OCI-LY7 (cell line): ENCODE measurements at regions of chr11 and their contacts with region 1.

Region 1: DNA sequence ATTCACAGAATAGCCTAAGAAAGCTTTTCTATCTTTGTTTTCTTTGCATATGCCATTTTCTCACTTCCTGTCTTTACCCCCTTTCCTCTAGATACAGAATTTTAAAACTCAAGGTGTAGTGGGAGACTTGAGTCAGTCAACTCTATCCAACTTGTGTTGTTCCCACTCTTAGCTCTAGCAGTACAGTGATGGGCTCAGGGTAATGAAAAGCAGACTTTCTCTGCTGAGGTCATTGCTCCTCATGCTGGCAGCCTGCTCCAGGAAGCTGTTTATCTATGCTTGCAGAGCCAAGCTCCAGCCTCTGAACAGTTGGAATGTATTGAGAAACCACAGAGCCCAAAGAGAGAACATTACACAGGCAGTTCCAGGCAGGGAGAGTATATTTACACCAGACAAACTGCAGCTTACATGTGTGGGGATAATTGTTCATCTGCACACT is 68.1 kb downstream of the CSTPP1 start:
- DNase-seq: peak; percentile 67
- H3K4me3 ChIP-seq: peak overlapping the region; percentile 35
- H3K27ac ChIP-seq: peak overlapping the region; percentile 89
- H3K4me1 ChIP-seq: peaks cover 84% of the 10 kb centered on the region
- CTCF ChIP-seq: no peak

Region 2: DNA sequence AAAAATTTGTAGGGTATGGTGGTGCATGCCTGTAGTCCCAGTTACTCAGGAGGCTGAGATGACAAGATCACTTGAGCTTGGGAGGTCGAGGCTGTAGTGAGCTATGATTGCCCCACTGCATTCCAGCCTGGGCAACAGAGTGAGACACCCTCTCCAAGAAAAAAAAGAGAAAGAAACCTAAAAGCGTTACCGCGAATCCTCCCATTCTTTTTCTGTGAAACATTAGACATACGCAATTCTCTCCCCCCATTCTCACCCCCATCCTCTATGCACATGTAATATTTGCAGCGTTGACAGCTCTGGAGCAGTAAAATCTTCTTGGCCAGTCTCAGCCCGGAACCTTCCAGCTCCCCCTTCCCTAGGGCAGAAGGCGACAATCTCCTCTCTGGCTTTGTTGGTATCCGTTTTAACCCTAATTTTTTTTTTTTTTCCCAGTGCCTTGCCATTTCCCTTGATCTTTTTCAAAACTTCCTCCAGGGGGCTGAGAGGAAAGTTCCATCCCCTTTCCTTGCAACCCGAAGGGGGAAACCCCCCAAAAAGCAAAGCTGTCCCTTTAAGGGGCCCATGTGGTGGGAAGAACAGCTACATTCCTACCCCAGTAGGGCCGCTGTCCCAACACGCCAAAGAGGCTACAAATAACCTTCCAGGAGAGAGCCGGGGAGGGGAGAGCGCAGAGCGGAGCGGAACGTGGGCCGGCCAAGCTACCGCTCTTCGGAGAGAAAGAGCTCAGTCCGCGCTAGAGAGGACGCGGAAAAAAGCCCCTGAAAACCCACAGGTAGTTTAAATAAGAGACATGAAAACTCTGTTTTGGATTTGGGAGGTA is 88.1 kb before region 1 on chr11:
- CTCF ChIA-PET with region 1: no interaction called
- POLR2A ChIA-PET with region 1: no interaction called
- intact Hi-C with region 1: loop called (anchors 5 kb)
- DNase-seq: no peak
- H3K4me3 ChIP-seq: peak overlapping the region; percentile 74
- H3K27ac ChIP-seq: no peak overlapping the region
- H3K4me1 ChIP-seq: peaks cover 66% of the 10 kb centered on the region
- CTCF ChIP-seq: peak; percentile 25; the same call in 1 of the 2 replicates

Region 3: DNA sequence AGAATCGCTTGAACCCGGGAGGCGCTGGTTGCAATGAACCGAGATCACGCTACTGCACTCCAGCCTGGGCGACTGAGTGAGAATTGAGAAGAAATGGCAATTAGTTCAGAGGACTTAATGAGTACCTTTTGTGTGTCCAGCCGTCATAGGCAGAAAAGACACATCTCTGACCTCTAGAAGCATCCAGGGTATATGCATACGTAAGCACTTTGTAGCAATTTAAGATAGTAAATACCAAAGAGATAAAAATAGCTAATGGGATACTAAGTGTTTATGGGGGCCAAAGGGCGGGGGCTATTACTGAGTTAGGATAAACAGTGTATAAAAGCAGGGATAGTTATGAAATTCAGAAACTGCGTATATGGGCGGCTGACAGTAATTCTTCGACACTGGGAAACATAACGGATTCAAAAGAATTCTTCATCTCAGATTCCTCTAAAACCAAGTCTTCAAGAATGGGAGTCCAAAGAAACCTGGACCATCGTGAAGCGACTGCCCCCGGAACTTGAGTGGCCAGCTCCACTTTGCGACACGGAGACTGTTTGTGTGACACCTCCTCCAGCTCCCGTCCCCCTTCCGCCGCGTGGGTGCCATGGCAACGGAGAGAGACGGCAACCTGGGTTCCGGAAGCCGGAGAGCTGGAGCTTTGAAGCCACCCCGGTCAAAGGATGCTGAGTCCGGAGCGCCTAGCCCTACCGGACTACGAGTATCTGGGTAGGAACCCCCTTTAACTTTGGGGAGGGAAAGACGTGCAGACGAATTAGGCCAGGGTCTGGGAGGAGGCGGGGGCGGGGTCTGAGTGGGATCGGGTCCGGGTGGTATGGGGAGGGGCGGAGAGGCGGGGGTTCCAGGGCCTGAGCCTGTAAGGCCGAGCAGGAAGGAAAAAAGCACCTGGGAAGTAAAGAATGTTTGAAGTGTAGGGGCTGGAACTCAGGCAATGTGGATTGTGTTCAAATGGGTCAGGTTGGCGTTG is 68.2 kb before region 1 on chr11 and contains the start of gene CSTPP1:
- CTCF ChIA-PET with region 1: no interaction called
- POLR2A ChIA-PET with region 1: interaction called, 6 read pairs
- intact Hi-C with region 1: loop called (anchors 5 kb)
- DNase-seq: peak; percentile 96
- H3K4me3 ChIP-seq: peak within 1 kb of the TSS; percentile 82
- H3K27ac ChIP-seq: peak within 1 kb of the TSS; percentile 36
- H3K4me1 ChIP-seq: peaks cover 16% of the 10 kb centered on the region
- CTCF ChIP-seq: no peak
- total RNA-seq, gene CSTPP1: 35.2 and 39.6 TPM in 2 replicates

Region 4: DNA sequence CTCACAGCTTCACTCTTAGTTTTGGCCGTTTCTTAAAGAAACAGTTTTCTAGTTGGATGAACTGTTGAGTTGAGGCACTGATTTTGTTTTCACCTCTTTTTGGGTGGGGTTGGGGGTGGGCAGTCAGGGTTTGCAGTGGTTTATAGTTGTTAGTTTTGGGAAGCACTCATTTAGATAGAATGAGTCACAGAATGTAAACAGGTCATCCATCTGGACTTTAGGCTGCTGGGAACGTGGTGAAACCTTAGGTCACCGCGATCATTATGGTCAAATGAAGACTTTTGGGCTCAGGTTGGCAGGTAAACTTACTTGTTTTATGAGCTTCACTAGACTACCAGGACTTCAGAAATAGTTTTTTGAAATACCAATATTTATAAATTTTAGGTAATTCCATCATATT is 19.6 kb before region 1 on chr11:
- CTCF ChIA-PET with region 1: interaction called, 3 read pairs
- POLR2A ChIA-PET with region 1: interaction called, 27 read pairs
- intact Hi-C with region 1: no loop called
- DNase-seq: no peak
- H3K4me3 ChIP-seq: no peak overlapping the region
- H3K27ac ChIP-seq: no peak overlapping the region
- H3K4me1 ChIP-seq: no peaks in the 10 kb centered on the region
- CTCF ChIP-seq: no peak

Region 5: GRCh38 chr11:47083913-47084312 is 79.3 kb after region 1 on chr11:
- CTCF ChIA-PET with region 1: no interaction called
- POLR2A ChIA-PET with region 1: interaction called, 11 read pairs
- intact Hi-C with region 1: no loop called
- DNase-seq: no peak
- H3K4me3 ChIP-seq: no peak overlapping the region
- H3K27ac ChIP-seq: no peak overlapping the region
- H3K4me1 ChIP-seq: peaks cover 8% of the 10 kb centered on the region
- CTCF ChIP-seq: no peak

Region 6: DNA sequence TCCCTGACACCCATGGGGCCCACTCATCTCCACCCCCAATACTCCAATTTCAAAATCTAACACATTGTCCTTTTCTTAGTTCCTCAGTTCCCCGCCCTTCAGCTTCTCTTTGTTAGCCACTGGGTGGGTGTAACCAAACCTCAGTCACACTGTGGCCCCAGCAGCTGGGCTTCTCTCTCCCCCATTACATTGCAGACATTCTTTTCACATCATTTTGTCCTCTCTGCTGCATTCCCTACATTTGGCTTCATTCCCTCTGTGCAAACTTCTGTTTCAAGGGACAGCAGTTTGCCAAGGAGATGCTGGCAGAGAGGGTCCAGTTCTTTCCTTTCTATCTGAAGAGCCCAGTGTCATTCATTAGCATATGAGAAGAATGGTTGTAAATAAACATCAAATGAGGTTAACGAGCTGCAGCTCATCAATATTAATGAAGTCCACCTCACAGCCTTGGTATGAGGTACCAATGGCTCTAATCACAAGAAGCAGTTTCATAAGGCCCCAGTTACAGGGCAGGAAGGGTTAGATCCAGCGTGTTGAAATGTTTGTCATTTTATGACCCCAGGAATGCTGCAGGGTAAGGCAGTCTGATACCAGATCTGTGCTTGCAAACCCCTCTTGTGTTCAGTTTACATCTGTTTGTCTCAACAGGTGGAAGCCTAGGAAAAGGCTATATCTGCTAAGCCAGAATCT is 99.8 kb after region 1 on chr11:
- CTCF ChIA-PET with region 1: interaction called, 3 read pairs
- POLR2A ChIA-PET with region 1: interaction called, 22 read pairs
- intact Hi-C with region 1: no loop called
- DNase-seq: peak; percentile 51
- H3K4me3 ChIP-seq: peak overlapping the region; percentile 20
- H3K27ac ChIP-seq: peak overlapping the region; percentile 99
- H3K4me1 ChIP-seq: peaks cover 83% of the 10 kb centered on the region
- CTCF ChIP-seq: no peak

Region 7: GRCh38 chr11:47152953-47153950 is 148.6 kb after region 1 on chr11:
- CTCF ChIA-PET with region 1: interaction called, 3 read pairs
- POLR2A ChIA-PET with region 1: interaction called, 16 read pairs
- intact Hi-C with region 1: loop called (anchors 2 kb)
- DNase-seq: peak; percentile 94
- H3K4me3 ChIP-seq: peak overlapping the region; percentile 53
- H3K27ac ChIP-seq: peak overlapping the region; percentile 95
- H3K4me1 ChIP-seq: peaks cover 93% of the 10 kb centered on the region
- CTCF ChIP-seq: peak; percentile 100

Region 8: GRCh38 chr11:47213985-47214564 is 209.5 kb after region 1 on chr11:
- CTCF ChIA-PET with region 1: no interaction called
- POLR2A ChIA-PET with region 1: no interaction called
- intact Hi-C with region 1: no loop called
- DNase-seq: peak; percentile 37
- H3K4me3 ChIP-seq: peak overlapping the region; percentile 69
- H3K27ac ChIP-seq: no peak overlapping the region
- H3K4me1 ChIP-seq: peaks cover 50% of the 10 kb centered on the region
- CTCF ChIP-seq: no peak